ENCODE measurements at regions of chr5 and their contacts with region 1.

Region 1: GRCh38 chr5:112049738-112050137 is 292.7 kb upstream of the NREP start:
- DNase-seq: no peak
- H3K4me3 ChIP-seq: no peak overlapping the region
- H3K27ac ChIP-seq: no peak overlapping the region
- H3K4me1 ChIP-seq: no peaks in the 10 kb centered on the region
- H3K27me3 ChIP-seq: no peaks in the 10 kb centered on the region
- CTCF ChIP-seq: no peak

Region 2: GRCh38 chr5:111948092-111948841 is 101.5 kb before region 1 on chr5:
- CTCF ChIA-PET with region 1: no interaction called
- POLR2A ChIA-PET with region 1: interaction called, 10 read pairs
- intact Hi-C with region 1: no loop called
- DNase-seq: no peak
- H3K4me3 ChIP-seq: no peak overlapping the region
- H3K27ac ChIP-seq: no peak overlapping the region
- H3K4me1 ChIP-seq: no peaks in the 10 kb centered on the region
- H3K27me3 ChIP-seq: no peaks in the 10 kb centered on the region
- CTCF ChIP-seq: no peak

Region 3: GRCh38 chr5:112628219-112628980 is 578.7 kb after region 1 on chr5:
- CTCF ChIA-PET with region 1: no interaction called
- POLR2A ChIA-PET with region 1: no interaction called
- intact Hi-C with region 1: no loop called
- DNase-seq: no peak
- H3K4me3 ChIP-seq: no peak overlapping the region
- H3K27ac ChIP-seq: no peak overlapping the region
- H3K4me1 ChIP-seq: no peaks in the 10 kb centered on the region
- H3K27me3 ChIP-seq: no peaks in the 10 kb centered on the region
- CTCF ChIP-seq: no peak

Measured in PC-9 (cell line).